ENCODE measurements at regions of chr1 and their contacts with region 1.

Region 1: DNA sequence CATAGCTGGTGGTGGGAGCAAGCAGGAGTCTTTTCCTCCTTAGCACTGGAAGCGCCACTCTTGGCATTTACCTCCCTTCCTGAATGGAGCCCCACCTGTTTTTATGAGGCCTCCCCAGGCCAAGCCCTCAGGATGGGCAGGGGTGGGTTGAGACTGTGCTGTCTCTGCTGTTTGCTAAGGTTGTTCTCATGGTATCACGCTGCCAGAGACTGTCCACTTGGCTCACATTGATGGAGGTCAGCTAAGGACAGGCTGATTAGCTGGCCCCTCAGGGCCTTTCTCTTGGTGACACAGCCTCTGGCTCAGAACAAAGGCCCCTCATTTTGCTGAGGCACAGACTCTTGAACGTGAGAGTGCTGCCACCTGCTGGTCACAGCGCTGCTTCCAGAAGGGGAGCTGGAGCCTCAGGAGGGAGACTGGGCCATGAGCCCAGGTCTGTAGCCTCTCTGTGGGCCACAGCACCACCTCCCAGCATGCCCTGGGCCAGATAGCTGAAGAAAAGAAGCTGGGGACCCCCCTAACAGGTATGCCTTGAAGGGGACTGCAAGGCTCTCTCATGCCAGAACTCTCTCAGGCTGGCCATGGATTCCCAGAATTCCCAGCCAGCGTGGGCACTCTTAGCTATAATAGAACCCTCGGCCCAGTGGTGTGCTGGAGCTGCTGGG is 85.6 kb downstream of the CD58 start:
- DNase-seq: peak; percentile 80 to 96 (median 86)
- H3K4me3 ChIP-seq: no peak overlapping the region
- H3K27ac ChIP-seq: no peak overlapping the region
- H3K4me1 ChIP-seq: no peaks in the 10 kb centered on the region
- H3K27me3 ChIP-seq: no peaks in the 10 kb centered on the region
- CTCF ChIP-seq: peak; percentile 83 to 94 (median 92)
- POLR2A ChIP-seq: no peak

Region 2: DNA sequence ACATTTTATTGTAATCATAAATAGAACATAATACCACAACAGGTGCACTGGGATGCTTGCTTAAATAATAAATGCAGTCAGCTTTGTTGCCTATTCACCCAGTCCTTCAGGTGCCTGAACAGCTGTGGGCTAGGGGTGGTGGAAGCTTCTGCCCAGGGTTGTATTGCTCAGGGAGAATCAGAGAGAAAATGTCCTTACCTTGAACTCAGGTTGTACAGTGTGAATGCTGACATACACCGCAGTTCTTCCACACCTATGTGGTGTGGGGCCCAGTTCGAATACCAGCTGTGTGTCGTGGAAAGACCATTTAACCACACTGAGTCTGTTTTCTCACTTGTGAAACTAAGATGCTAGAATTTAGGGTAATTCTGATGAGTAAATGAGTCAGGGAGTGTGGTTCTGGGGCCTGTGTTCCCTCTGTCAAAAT is 227.8 kb before region 1 on chr1:
- intact Hi-C with region 1: no loop called
- DNase-seq: no peak
- H3K4me3 ChIP-seq: no peak overlapping the region
- H3K27ac ChIP-seq: no peak overlapping the region
- H3K4me1 ChIP-seq: no peaks in the 10 kb centered on the region
- H3K27me3 ChIP-seq: no peaks in the 10 kb centered on the region
- CTCF ChIP-seq: no peak
- POLR2A ChIP-seq: no peak

Region 3: GRCh38 chr1:116345843-116346242 is 139.4 kb before region 1 on chr1:
- intact Hi-C with region 1: loop called in 1 of 2 experiments (anchors 5 kb)
- DNase-seq: no peak
- H3K4me3 ChIP-seq: no peak overlapping the region
- H3K27ac ChIP-seq: no peak overlapping the region
- H3K4me1 ChIP-seq: no peaks in the 10 kb centered on the region
- H3K27me3 ChIP-seq: no peaks in the 10 kb centered on the region
- CTCF ChIP-seq: no peak
- POLR2A ChIP-seq: no peak

Region 4: DNA sequence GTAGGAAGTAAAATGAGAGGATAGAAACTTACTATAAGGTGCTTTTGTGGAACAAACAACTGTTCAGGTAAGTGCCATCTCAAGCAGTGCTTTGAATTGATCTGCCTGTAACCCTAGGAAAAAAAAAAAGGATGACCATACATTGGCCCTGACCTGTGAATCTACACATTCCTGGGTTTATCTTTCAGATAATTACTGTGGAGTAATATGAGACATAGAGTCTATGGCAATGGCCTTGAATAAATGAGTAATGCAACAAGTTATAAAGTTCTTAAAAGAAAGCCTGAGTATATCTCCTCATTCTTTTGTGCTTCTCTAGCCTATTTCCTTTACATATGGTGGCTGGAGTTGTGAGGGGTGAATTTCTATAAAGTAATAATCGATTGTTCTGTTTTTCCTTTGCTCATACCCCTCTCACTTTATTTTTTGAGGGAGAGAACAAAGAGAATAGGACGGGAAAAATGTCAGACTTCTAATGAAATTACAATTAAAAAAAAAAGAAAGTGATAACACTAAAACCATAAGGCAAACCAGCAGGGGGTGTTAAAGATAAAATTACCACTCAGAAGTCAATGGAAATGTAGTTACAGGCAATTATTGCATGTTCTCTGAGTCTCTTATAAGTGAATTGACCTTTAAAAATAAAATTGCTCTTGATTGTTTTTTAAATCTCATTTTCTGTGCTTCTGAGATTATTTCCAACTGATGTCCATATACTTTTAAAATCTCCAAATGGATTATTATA is 124.6 kb before region 1 on chr1:
- intact Hi-C with region 1: loop called (anchors 5 kb)
- DNase-seq: no peak
- H3K4me3 ChIP-seq: no peak overlapping the region
- H3K27ac ChIP-seq: no peak overlapping the region
- H3K4me1 ChIP-seq: peaks cover 0 to 4% of the 10 kb centered on the region in 2 donors
- H3K27me3 ChIP-seq: no peaks in the 10 kb centered on the region
- CTCF ChIP-seq: peak; percentile 17 to 63 (median 48)
- POLR2A ChIP-seq: no peak

Region 5: DNA sequence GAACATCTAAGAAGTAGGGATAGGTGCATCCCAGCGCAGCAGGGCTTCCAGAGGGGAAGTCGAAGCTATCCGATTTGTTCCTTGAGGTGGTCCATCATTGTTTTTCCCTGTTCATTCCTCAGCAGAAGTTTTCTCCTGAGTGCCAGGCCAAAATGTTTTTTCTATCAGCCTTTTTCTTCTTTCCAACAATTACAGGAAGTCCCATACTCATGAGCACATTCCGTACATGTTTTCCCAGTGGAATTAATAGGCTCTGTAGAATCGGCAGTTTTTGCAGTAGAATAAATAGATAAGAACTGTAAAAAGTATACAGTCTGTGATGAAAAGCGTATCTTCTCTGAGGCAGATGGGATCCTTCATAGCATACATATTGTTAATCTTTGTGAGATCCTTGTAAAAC is 541.2 kb after region 1 on chr1:
- intact Hi-C with region 1: no loop called
- DNase-seq: no peak
- H3K4me3 ChIP-seq: no peak overlapping the region
- H3K27ac ChIP-seq: no peak overlapping the region
- H3K4me1 ChIP-seq: no peaks in the 10 kb centered on the region
- H3K27me3 ChIP-seq: no peaks in the 10 kb centered on the region
- CTCF ChIP-seq: no peak
- POLR2A ChIP-seq: no peak

Region 6: DNA sequence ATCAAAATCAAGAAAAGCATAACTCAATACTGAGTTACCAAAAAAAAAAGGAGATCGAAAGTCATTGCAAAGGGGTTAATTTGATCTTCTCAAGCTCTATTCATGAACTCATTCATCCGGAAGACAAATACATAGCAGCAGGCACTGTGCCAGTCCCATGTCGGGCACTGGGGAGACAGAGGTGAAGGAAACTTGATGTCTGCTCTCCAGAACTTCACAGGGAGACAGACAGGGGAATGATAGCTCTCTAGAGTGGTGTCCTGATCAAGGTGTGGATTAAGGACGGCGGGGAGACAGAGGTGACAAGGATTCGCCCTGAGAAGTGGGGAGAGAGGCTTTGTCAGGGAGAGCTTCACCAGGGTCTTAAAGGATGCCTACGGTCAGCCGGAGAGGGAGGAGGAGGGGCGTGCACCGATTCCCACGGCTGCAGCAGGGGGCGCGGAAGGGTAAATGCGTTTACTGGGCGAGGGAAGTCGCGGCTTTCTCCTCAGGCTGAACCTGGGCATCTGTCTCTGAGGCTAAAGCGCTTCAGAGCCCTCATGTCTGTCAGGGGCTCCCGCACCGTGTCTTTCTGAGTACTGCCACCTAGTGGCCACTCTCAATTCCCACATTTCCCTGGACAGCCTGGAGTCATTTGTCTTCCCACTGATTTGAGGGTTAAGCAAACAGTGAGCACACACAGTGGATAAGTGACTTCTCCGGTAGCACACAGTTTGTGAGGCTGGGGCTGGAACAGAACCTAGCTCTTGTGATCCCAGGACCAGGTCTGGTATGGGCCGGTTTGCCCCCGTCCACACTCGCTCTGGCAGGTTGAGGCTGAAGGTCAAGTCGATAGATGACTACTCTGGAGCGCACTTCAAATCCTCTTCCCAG is 1273.5 kb after region 1 on chr1:
- intact Hi-C with region 1: no loop called
- DNase-seq: peak; percentile 71 to 91 (median 79)
- H3K4me3 ChIP-seq: peak overlapping the region in 1 of 4 donors; percentile 49
- H3K27ac ChIP-seq: no peak overlapping the region
- H3K4me1 ChIP-seq: peaks cover 0 to 6% of the 10 kb centered on the region in 2 donors
- H3K27me3 ChIP-seq: no peaks in the 10 kb centered on the region
- CTCF ChIP-seq: peak; percentile 80 to 92 (median 84)
- POLR2A ChIP-seq: no peak

Measured in adrenal gland (tissue), 19 donors.